Ascending aorta (tissue), 2 donors: ENCODE measurements at regions of chr3 and their contacts with region 1.

Region 1: DNA sequence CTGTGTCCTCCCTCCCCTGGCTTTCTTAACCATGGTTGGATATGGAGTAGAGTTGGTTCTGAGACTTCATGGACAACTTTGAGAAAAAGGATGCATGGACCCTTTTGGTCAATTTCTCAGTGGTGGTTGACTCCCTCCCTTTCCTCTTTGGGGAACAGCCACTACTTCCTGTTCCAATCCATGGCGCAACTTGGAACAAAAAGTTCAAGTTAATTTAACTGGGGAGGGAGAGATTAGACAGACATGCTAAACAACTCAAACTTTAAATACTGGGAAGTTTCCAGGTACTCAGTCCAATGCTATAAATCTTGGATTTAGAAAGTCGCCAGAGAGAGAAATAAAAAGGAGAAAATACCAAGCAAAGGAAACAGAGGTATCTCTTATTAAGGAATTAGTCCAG is 202.2 kb downstream of the PDZRN3 start:
- DNase-seq: no peak
- H3K4me3 ChIP-seq: peak overlapping the region in 1 of 2 donors; percentile 4
- H3K27ac ChIP-seq: peak overlapping the region in 1 of 2 donors; percentile 17
- H3K4me1 ChIP-seq: peaks cover 0 to 37% of the 10 kb centered on the region in 2 donors
- H3K27me3 ChIP-seq: no peaks in the 10 kb centered on the region
- CTCF ChIP-seq: no peak

Region 2: DNA sequence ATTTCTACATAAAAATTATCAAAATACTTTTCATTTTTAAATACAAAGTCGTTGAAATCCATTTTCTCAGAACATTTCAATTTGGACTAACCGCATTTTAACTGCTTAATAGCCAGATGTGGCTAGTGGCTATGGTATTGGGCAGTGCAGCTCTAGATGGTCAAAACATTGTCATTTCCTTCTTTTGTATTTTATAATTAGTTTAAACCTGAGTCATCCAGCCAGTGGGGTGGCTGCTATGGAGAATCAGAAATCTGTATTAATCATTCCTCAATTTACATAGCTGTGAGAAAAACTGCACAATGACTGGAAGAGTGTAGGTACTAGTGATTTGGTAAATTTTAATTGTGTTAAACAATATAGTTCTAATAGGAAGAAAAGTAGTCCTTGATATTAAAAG is 43.1 kb before region 1 on chr3:
- intact Hi-C with region 1: no loop called
- DNase-seq: no peak
- H3K4me3 ChIP-seq: no peak overlapping the region
- H3K27ac ChIP-seq: no peak overlapping the region
- H3K4me1 ChIP-seq: no peaks in the 10 kb centered on the region
- H3K27me3 ChIP-seq: no peaks in the 10 kb centered on the region
- CTCF ChIP-seq: no peak

Region 3: DNA sequence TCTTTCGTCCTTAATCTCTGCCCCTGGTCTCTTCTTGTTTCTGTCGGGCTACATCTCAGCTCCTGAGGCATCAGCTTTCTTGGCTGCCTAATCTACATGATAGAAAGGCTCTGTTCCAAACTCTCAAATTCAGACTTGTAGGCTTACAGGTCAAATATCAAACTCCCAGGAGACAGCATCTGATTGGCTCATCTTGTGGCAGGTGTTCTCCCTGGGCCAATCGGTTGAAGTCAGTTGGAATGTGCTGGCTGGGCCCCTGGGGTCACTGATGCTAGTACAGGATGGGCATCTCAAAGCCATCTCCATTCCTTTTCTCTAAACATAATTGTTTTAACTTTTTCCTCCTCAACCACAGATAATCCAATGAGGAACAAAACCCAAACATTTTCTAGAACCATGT is 993.2 kb after region 1 on chr3:
- intact Hi-C with region 1: loop called (anchors 5 kb)
- DNase-seq: no peak
- H3K4me3 ChIP-seq: no peak overlapping the region
- H3K27ac ChIP-seq: no peak overlapping the region
- H3K4me1 ChIP-seq: no peaks in the 10 kb centered on the region
- H3K27me3 ChIP-seq: no peaks in the 10 kb centered on the region
- CTCF ChIP-seq: no peak